ENCODE measurements at regions of chr3 and their contacts with region 1.

Region 1: DNA sequence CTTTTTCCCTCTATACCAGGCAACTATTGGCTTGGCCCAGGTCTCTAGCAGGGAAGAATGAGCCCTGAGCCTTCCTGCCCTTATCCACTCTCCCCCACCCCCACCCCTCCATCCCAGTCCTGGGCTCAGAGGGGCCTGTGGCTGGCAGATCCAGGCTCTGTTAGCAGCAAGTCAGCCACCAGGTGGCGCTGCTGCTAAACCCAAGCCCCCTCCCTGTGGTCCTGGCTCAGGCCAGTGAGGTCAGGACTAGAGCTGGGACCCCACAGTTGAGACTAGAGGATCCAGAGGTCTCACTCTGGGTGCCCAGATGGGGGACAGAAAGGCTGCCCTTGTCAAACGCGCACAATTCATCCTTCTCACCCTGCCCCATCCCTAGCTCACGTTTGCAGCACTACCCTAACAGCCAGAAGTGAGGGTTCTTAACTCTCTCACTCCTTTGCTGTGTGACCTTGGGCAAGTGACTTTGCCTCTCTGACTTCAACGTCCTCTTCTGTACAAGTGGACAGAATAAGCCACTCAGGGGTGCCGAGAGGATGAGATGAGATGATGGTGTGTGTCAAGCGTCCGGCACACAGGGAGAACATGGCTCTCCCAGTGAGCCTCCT is 46.8 kb upstream of the SLC6A1 start:
- DNase-seq: no peak
- H3K4me3 ChIP-seq: no peak overlapping the region
- H3K27me3 ChIP-seq: no peaks in the 10 kb centered on the region; the same call in none of the 2 replicates
- CTCF ChIP-seq: peak; percentile 79

Region 2: GRCh38 chr3:10835406-10835805 is 110.4 kb before region 1 on chr3:
- CTCF ChIA-PET with region 1: no interaction called
- POLR2A ChIA-PET with region 1: no interaction called
- DNase-seq: no peak
- H3K4me3 ChIP-seq: no peak overlapping the region
- H3K27me3 ChIP-seq: no peaks in the 10 kb centered on the region; the same call in 1 of the 2 replicates
- CTCF ChIP-seq: no peak

Region 3: DNA sequence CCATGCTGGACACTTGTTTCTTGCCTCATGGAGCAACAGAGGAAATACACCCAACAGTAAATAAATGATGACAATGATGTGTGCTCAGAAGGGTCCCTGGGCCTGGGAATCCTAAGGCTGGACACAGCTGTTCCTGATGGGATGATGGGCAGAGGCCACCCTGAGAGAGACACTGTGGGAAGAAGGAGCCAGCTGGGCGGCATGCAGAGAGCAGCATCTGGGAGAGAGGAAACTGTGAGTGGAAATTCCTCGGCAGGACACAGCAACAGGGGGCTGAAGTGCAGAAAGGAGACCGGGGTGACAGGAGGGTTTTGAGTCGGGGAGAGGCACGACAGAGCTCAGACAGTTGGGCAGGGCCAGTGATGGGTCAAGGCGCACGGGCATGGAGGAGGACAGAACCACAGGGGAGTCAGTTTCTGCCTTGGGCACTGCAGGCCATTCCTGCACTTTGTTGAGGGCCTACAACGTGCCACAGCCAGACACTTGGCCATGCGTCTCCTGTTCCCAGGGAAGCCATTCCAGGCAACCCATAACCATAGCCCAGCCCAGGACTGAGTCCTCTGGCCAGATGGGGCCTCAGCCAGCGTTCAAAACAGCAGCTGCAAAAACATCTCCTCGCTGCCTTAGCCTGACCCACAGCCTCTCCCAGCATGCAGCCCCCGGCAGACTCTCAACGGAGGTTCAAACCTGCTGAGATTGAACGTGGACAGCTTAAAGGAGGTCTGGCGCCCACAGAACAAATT is 10.1 kb after region 1 on chr3:
- CTCF ChIA-PET with region 1: interaction called, 10 read pairs
- POLR2A ChIA-PET with region 1: no interaction called
- DNase-seq: no peak
- H3K4me3 ChIP-seq: no peak overlapping the region
- H3K27me3 ChIP-seq: peaks cover 7% of the 10 kb centered on the region
- CTCF ChIP-seq: no peak

Region 4: GRCh38 chr3:10983219-10983916 is 37.6 kb after region 1 on chr3:
- CTCF ChIA-PET with region 1: interaction called, 13 read pairs
- POLR2A ChIA-PET with region 1: no interaction called
- DNase-seq: no peak
- H3K4me3 ChIP-seq: no peak overlapping the region
- H3K27me3 ChIP-seq: peaks cover 3% of the 10 kb centered on the region; the same call in 1 of the 2 replicates
- CTCF ChIP-seq: peak; percentile 86

Region 5: DNA sequence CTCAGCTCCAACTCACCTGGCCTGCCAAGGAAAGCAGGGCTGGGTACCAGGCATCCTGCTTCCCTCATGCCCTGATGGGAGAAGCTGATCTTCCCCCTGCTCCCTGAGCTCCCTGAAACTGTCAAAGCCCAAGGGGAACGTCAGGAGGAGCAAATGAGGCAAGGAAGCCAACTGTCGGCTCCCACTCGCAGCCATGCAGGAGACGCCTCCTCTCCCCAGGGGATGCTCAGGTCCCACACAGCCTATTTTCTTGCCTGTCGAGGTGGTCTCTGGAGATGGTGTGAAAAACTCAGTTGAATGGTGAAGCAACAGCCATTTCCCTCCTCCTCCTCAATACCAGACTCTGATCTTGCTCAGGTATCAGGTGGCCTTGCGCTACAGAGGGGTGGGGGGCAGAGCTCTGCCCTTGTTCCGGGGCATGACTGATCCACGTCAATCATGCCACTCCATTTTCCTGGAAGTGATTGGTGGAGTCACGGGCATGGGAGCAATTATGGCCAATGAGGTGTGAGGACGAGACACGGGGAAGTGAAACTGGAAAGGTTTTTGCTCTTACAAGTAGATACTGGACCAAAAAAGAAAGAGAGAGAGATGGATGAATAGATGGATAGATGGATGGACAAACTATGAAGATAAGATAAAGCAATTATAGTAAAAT is 105.0 kb after region 1 on chr3:
- CTCF ChIA-PET with region 1: interaction called, 15 read pairs
- POLR2A ChIA-PET with region 1: no interaction called
- DNase-seq: no peak
- H3K4me3 ChIP-seq: no peak overlapping the region
- H3K27me3 ChIP-seq: peaks cover 8% of the 10 kb centered on the region
- CTCF ChIP-seq: no peak